ENCODE measurements at regions of chr1 and their contacts with region 1.

Region 1: GRCh38 chr1:119613769-119614720 is 34.0 kb downstream of the ZNF697 start:
- DNase-seq: peak; percentile 77 to 88
- H3K4me3 ChIP-seq: no peak overlapping the region
- H3K27ac ChIP-seq: no peak overlapping the region
- H3K4me1 ChIP-seq: no peaks in the 10 kb centered on the region
- H3K27me3 ChIP-seq: no peaks in the 10 kb centered on the region
- CTCF ChIP-seq: peak; percentile 98

Region 2: GRCh38 chr1:119549719-119550132 is 64.3 kb before region 1 on chr1:
- CTCF ChIA-PET with region 1: no interaction called
- POLR2A ChIA-PET with region 1: no interaction called
- intact Hi-C with region 1: loop called (anchors 1 kb)
- DNase-seq: peak; percentile 51 to 59
- H3K4me3 ChIP-seq: no peak overlapping the region
- H3K27ac ChIP-seq: no peak overlapping the region
- H3K4me1 ChIP-seq: peaks cover 13% of the 10 kb centered on the region
- H3K27me3 ChIP-seq: no peaks in the 10 kb centered on the region
- CTCF ChIP-seq: peak; percentile 76

Region 3: GRCh38 chr1:119675349-119676345 is 61.6 kb after region 1 on chr1:
- CTCF ChIA-PET with region 1: interaction called, 7 read pairs
- POLR2A ChIA-PET with region 1: interaction called, 3 read pairs
- intact Hi-C with region 1: loop called (anchors 1 kb)
- DNase-seq: peak; percentile 78
- H3K4me3 ChIP-seq: peak overlapping the region; percentile 49
- H3K27ac ChIP-seq: peak overlapping the region; percentile 97
- H3K4me1 ChIP-seq: peaks cover 45% of the 10 kb centered on the region
- H3K27me3 ChIP-seq: no peaks in the 10 kb centered on the region
- CTCF ChIP-seq: peak; percentile 98

Region 4: GRCh38 chr1:119731065-119731464 is 117.0 kb after region 1 on chr1:
- CTCF ChIA-PET with region 1: interaction called, 18 read pairs
- POLR2A ChIA-PET with region 1: no interaction called
- intact Hi-C with region 1: no loop called
- DNase-seq: peak; percentile 78 to 99
- H3K4me3 ChIP-seq: no peak overlapping the region
- H3K27ac ChIP-seq: peak overlapping the region; percentile 37
- H3K4me1 ChIP-seq: peaks cover 50% of the 10 kb centered on the region
- H3K27me3 ChIP-seq: no peaks in the 10 kb centered on the region
- CTCF ChIP-seq: no peak

Region 5: DNA sequence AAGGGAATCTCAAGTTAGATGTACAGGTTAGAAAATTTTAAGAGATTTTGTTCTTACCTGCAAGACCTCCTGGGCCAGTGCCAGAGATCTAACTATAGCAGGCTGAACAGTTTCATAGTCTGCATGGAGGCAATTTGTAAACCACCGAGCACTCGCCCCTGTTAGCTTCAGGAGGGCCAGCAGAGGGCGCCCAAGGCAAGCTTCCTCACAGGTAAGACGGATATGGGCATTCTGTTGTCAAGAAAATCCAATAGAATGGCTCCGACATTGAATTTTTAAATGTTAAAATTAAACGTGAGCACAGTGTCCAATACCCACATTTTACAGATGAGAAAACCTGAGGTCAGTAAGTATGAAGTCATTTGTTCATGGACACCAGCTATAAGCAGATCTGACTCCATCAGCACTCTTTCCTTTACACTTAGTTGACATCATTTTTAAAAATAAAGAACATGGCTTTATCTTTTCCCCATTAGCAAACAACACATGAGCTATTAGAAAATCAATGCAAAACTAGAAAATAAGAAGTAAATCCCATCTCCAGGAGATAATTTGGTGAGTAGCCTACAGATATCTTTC is 195.0 kb after region 1 on chr1:
- CTCF ChIA-PET with region 1: interaction called, 3 read pairs
- POLR2A ChIA-PET with region 1: no interaction called
- intact Hi-C with region 1: loop called (anchors 1 kb)
- DNase-seq: peak; percentile 64 to 67
- H3K4me3 ChIP-seq: 0 out of 2 replicates have a peak overlapping the region, but pooled peaks have one; percentile 2
- H3K27ac ChIP-seq: no peak overlapping the region
- H3K4me1 ChIP-seq: no peaks in the 10 kb centered on the region
- H3K27me3 ChIP-seq: no peaks in the 10 kb centered on the region
- CTCF ChIP-seq: peak; percentile 99

Region 6: DNA sequence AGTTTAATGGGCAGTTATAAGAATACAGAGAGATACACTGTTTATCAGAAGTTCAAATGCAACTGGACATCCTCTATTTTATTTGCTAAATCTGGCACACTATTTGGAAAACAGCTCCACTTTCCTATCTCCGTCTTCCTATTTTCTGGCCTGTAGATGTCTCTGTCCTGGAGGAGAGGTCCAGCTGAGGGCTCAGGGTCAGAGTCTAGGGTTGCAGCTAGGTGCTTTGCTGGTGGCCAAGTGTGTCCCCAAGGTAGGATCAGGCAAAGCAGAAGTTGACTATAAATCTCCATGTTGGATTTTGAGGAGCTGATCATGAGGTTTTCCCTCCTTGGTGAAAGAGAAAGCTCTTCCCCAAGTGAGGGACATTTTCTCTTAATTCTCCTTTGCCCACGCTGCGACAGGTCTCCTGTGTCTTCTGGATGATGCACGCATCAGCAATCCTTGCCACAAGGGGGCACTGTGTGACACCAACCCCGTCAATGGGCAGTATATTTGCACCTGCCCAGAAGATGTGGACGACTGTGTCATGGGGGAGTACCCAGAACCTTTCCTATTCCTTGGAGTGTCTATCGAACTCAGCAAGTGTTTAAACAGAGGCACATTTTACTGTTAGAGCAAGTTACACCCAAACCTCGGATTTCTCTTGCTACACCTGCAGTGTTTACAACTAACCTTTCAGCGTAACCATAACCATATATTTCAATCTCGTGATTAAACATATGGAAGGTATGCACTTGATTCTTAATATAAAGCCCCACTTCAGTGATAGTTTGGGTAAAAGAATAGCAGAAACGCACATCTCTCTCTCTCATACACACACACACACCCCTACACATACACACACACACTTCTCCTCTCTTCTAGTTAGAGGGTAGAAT is 272.1 kb after region 1 on chr1:
- CTCF ChIA-PET with region 1: no interaction called
- POLR2A ChIA-PET with region 1: no interaction called
- intact Hi-C with region 1: no loop called
- DNase-seq: peak in 1 of 2 experiments; percentile 49
- H3K4me3 ChIP-seq: no peak overlapping the region
- H3K27ac ChIP-seq: no peak overlapping the region
- H3K4me1 ChIP-seq: no peaks in the 10 kb centered on the region
- H3K27me3 ChIP-seq: no peaks in the 10 kb centered on the region
- CTCF ChIP-seq: peak; percentile 93

Region 7: DNA sequence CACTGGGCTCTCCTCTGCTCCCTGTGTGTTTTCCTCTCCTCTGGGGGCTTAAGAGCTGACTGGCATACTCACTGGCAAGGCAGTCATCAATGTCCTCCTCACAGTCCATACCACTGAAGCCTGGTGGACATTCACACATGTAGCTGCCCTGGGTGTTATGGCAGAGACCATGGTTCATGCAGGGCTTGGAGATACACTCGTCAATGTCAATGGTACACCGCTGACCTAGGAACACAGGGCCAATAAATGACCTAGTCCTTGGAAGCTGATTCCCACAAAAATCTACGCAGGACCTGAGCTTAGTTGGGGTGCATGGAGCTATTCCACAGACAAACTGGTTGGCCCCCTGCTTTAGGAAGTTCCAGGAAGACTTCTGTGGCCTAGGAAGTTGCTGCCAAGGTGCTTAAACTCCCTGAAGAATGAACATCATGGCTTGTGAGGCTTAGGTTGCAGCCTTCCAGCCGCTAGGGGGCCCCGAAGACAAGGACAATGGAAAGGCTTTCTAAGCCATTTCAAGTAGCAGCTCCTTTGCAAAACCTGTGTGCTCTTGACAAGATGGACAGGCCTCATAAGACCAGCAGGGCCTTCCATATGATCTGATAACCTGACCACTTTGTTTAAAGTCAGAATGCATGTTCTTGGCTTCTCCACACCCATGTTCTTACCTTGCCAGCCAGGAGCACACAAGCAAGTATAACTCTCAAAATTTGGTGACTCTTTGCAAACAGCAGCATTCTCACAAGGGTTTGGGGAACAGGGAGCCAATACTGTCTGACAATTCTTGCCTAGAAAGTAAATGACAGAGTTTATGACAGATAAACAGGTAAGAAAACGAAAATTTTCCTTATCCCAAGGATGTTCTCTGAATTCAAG is 334.5 kb after region 1 on chr1:
- CTCF ChIA-PET with region 1: no interaction called
- POLR2A ChIA-PET with region 1: no interaction called
- intact Hi-C with region 1: loop called (anchors 10 kb)
- DNase-seq: peak; percentile 70 to 74
- H3K4me3 ChIP-seq: no peak overlapping the region
- H3K27ac ChIP-seq: no peak overlapping the region
- H3K4me1 ChIP-seq: no peaks in the 10 kb centered on the region
- H3K27me3 ChIP-seq: no peaks in the 10 kb centered on the region
- CTCF ChIP-seq: peak; percentile 98

Measured in PC-9 (cell line).